Sigmoid colon (tissue), 7 donors: ENCODE measurements at regions of chr16 and their contacts with region 1.

Region 1: DNA sequence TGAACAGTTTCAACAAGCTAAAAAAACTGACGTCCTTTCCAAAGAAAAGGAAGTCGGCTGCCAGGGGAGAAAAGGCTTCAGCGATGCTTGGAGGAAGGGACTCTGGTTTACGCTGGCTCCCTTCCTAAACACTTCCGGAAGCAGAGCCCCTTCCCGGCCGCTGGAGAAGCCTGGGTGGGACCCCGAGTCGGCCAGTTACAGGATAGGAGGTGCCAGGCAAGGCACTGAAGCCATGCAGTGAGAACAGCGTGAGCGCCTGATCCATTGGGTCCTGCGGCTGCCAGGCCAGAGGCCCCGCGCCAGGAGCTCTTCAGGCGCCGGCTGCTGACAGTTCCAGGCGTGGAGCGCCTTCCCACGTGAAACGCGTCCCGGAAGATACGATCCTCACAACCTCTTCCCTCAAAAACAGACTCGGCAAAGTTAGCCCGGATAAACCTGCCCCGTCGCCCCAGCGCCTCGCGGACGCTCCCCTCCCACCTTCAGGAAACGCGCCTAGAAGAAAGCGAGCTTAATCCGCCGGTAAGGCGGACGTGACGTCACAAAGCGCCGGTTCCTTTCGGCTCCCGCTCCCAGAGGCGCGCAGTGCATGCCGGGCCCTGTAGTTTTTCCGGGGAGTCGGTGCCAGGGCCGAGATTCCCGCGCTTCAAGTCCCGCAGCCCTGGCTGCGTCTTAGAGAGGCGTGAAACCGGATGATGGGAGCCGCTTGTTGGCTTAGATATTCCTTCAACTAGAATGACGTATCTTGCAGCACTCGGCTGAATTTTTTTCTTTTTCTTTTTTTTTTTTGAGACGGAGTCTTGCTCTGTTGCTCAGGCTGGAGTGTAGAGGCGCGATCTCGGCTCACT is at the start of gene ADAT1:
- DNase-seq: peak; percentile 99
- H3K4me3 ChIP-seq: peak within 1 kb of the TSS; percentile 59 to 68 (median 63)
- H3K27ac ChIP-seq: peak within 1 kb of the TSS; percentile 85 to 92 (median 90)
- H3K4me1 ChIP-seq: peaks cover 0 to 20% (median 15%) of the 10 kb centered on the region in 4 donors
- H3K27me3 ChIP-seq: no peaks in the 10 kb centered on the region
- CTCF ChIP-seq: no peak
- EP300 ChIP-seq: peak in 2 of 4 donors; percentile 28 to 53
- POLR2A ChIP-seq: peak; percentile 82 to 83
- total RNA-seq, gene ADAT1: 21.7 to 38.5 (median 28.8) TPM

Region 2: DNA sequence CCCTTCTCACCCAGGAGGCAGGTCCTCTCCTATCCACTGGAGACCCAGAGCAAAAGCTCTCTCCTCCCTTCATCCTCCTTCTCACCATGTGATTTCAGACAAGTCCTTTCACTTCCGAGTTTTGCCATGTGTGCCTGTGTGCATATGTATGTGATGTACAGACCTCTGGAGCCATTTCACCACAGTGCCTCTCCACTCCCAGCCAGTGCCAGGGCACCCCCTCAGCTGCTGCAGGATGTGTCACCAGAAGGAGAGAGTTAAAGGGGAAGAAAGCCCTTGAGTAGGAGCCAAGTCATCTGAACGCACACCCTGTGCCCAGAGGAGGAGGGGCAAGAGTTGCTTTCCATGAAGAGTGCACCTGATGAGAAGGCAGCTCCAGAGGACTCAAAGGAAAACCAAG is 144.9 kb before region 1 on chr16:
- intact Hi-C with region 1: no loop called
- DNase-seq: no peak
- H3K4me3 ChIP-seq: no peak overlapping the region
- H3K27ac ChIP-seq: no peak overlapping the region
- H3K4me1 ChIP-seq: no peaks in the 10 kb centered on the region
- H3K27me3 ChIP-seq: no peaks in the 10 kb centered on the region
- CTCF ChIP-seq: no peak
- EP300 ChIP-seq: no peak
- POLR2A ChIP-seq: no peak

Region 3: DNA sequence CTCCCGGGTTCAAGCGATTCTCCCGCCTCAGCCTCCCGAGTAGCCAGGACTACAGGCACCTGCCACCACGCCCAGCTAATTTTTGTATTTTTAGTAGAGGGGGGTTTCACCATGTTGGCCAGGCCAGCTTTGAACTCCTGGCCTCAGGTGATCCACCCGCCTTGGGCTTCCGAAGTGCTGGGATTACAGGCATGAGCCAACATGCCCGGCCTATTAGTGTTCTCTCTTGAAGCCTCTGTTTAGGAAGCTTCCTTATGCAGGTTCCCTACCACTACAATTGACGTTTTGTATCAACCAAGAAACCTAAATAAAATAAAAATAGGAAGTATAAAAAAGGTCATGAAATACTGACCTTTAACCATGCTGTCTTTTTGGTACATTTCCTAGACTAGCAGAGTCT is 103.1 kb before region 1 on chr16:
- intact Hi-C with region 1: loop called (anchors 2 kb)
- DNase-seq: no peak
- H3K4me3 ChIP-seq: no peak overlapping the region
- H3K27ac ChIP-seq: no peak overlapping the region
- H3K4me1 ChIP-seq: peaks cover 0 to 11% (median 9%) of the 10 kb centered on the region in 4 donors
- H3K27me3 ChIP-seq: no peaks in the 10 kb centered on the region
- CTCF ChIP-seq: no peak
- EP300 ChIP-seq: no peak
- POLR2A ChIP-seq: no peak

Region 4: GRCh38 chr16:75566040-75566810 is 56.8 kb before region 1 on chr16 and contains the start of gene GABARAPL2:
- intact Hi-C with region 1: loop called (anchors 2 kb)
- DNase-seq: peak; percentile 90
- H3K4me3 ChIP-seq: peak within 1 kb of the TSS; percentile 92 to 99 (median 94)
- H3K27ac ChIP-seq: peak within 1 kb of the TSS; percentile 81 to 90 (median 84)
- H3K4me1 ChIP-seq: peaks cover 0 to 56% (median 38%) of the 10 kb centered on the region in 4 donors
- H3K27me3 ChIP-seq: no peaks in the 10 kb centered on the region
- CTCF ChIP-seq: no peak
- EP300 ChIP-seq: no peak
- POLR2A ChIP-seq: peak; percentile 68 to 71
- total RNA-seq, gene GABARAPL2: 91.4 to 136 (median 108) TPM

Region 5: DNA sequence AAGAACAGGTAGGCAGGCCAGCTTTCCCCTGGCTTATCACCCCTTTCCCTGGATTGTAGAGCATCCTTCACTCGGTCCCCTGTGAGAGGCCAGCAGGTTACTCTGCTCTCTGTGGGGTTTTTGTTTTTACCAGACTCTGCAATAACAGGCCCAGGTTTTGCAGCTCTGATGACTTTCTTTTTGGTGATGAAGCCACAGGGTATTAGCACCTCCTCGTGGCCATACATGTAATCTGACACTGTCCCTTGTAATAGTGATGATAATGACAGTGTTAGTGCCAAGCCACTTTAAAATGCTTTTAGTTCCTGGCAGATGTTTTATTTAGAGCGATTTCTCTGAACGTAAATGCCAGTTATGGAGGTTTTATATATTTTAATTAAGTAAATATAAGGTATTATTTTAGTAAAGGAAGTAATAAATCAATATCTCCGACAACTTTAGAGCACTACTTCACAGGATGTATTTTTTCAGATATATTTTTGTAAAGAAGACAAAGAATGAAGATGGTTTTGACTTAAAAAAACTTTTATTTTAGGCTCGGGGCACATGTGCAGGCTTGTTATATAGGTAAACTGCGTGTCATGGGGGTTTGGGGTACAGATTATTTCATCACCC is 141.3 kb after region 1 on chr16:
- intact Hi-C with region 1: loop called (anchors 1 kb)
- DNase-seq: peak; percentile 66
- H3K4me3 ChIP-seq: no peak overlapping the region
- H3K27ac ChIP-seq: no peak overlapping the region
- H3K4me1 ChIP-seq: no peaks in the 10 kb centered on the region
- H3K27me3 ChIP-seq: no peaks in the 10 kb centered on the region
- CTCF ChIP-seq: peak; percentile 39 to 74 (median 66)
- EP300 ChIP-seq: no peak
- POLR2A ChIP-seq: no peak

Region 6: GRCh38 chr16:75868636-75869632 is 246.0 kb after region 1 on chr16:
- intact Hi-C with region 1: no loop called
- DNase-seq: no peak
- H3K4me3 ChIP-seq: no peak overlapping the region
- H3K27ac ChIP-seq: no peak overlapping the region
- H3K4me1 ChIP-seq: no peaks in the 10 kb centered on the region
- H3K27me3 ChIP-seq: no peaks in the 10 kb centered on the region
- CTCF ChIP-seq: no peak
- EP300 ChIP-seq: no peak
- POLR2A ChIP-seq: no peak